ENCODE measurements at regions of chr12 and their contacts with region 1.

Region 1: DNA sequence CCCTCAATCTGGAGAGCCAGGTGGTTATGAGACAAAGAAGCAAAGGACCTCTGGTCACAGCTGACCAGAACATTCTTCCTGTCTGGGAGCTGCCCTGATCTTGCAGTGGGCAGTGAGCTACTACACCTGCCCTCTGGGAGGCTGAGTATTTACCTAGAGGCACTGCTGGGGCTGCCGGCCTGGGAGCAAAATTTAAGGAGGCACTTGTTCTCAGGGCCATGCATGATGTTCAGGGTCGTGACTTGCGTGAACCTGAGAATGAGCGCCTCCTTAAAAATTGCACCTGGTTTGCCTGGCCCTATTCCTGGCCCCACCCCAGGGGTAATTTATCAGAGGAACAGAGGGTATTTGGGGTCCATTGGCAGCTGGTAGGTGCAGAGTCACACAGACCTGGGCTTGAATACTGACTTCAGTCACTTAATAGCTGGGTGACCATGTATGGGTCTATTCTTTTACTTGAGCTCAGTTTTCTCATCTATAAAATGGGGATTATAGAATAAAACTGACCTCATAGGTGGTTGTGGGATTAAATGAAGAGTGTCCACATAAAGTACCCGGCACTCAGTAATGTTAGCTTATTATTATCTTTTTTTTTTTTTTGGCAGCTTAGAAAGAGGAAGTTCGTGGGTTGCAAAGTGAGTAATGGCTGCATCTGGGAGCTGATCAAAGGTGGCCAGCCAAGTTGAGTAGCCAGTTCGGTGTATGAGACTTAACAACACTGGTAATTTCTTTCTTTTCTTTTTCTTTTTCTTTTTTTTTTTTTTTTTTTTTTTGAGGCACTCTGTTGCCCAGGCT is 107.4 kb upstream of the MED13L start:
- DNase-seq: peak; percentile 53
- ATAC-seq: peak; percentile 62
- H3K4me3 Mint-ChIP-seq: no peak overlapping the region
- H3K27ac Mint-ChIP-seq: no peak overlapping the region
- H3K4me1 Mint-ChIP-seq: peaks cover 52% of the 10 kb centered on the region
- H3K27me3 Mint-ChIP-seq: no peaks in the 10 kb centered on the region; the same call in 1 of the 2 replicates
- CTCF ChIP-seq: no peak

Region 2: DNA sequence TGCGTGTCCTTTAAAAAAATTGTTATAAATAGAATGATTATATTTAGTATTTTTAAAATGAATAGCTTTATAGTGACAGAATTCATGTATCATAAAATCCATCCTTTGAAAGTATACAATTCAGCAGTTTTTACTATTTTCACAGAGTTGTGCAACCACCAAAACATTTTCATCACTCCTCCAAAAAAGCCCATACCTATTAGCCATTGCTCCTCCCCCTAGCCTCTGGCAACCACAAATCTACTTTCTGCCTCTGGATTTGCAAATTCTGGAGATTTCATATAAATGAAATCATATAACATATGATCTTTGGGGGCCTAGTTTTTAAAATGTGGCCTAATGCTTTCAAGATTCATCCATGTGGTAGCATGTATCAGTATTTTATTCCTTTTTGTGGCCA is 10.5 kb after region 1 on chr12:
- CTCF ChIA-PET with region 1: no interaction called
- POLR2A ChIA-PET with region 1: no interaction called
- DNase-seq: no peak
- ATAC-seq: no peak
- H3K4me3 Mint-ChIP-seq: no peak overlapping the region
- H3K27ac Mint-ChIP-seq: no peak overlapping the region
- H3K4me1 Mint-ChIP-seq: no peaks in the 10 kb centered on the region
- H3K27me3 Mint-ChIP-seq: no peaks in the 10 kb centered on the region
- CTCF ChIP-seq: no peak

Region 3: GRCh38 chr12:116406516-116406915 is 21.6 kb after region 1 on chr12:
- CTCF ChIA-PET with region 1: interaction called, 11 read pairs
- POLR2A ChIA-PET with region 1: interaction called, 5 read pairs
- DNase-seq: peak; percentile 34
- ATAC-seq: peak; percentile 89
- H3K4me3 Mint-ChIP-seq: no peak overlapping the region
- H3K27ac Mint-ChIP-seq: peak overlapping the region; percentile 80; the same call in 1 of the 2 replicates
- H3K4me1 Mint-ChIP-seq: peaks cover 9% of the 10 kb centered on the region
- H3K27me3 Mint-ChIP-seq: no peaks in the 10 kb centered on the region
- CTCF ChIP-seq: no peak

Measured in WTC11 (cell line).